Left cardiac atrium (tissue), 4 donors: ENCODE measurements at regions of chr10 and their contacts with region 1.

Region 1: GRCh38 chr10:58952747-58953466 is 223.5 kb upstream of the PHYHIPL start:
- DNase-seq: peak; percentile 38
- ATAC-seq: peak; percentile 66 to 82

Region 2: GRCh38 chr10:58531084-58531695 is 421.7 kb before region 1 on chr10:
- intact Hi-C with region 1: loop called in 1 of 2 experiments (anchors 10 kb)
- DNase-seq: peak; percentile 24
- ATAC-seq: peak in 1 of 2 donors; percentile 55

Region 3: GRCh38 chr10:58625070-58625469 is 327.8 kb before region 1 on chr10:
- intact Hi-C with region 1: no loop called
- DNase-seq: no peak
- ATAC-seq: peak in 1 of 2 donors; percentile 93

Region 4: DNA sequence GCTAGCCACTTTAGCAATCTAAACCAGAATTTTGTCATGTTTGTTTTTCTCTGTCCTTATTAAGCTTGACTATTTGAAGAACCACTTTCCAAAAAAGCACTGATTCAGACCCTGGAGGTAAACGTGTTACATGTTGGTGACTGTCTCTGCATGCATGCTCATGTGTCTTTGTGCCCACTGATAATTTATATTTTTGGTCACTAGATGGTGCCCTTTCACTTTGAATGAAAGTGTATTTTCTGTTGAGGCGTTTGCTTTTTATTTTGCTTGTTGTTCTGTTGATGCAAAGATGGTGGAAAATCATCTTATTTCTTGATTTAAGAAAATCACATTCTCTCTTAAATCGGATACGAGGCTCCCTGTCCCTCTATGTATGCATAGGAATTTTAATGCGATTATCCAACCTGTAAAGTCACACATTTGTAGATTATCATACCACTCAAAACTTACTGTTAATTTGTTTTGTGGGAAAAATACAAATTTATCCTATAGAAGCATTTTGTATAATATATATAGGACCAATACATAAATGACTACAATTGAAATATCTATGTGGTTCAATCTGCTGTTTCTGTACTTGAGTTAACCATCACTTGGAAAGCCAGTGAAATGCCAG is 170.9 kb before region 1 on chr10:
- intact Hi-C with region 1: loop called in 1 of 2 experiments (anchors 5 kb)
- DNase-seq: no peak
- ATAC-seq: peak; percentile 14 to 51

Region 5: DNA sequence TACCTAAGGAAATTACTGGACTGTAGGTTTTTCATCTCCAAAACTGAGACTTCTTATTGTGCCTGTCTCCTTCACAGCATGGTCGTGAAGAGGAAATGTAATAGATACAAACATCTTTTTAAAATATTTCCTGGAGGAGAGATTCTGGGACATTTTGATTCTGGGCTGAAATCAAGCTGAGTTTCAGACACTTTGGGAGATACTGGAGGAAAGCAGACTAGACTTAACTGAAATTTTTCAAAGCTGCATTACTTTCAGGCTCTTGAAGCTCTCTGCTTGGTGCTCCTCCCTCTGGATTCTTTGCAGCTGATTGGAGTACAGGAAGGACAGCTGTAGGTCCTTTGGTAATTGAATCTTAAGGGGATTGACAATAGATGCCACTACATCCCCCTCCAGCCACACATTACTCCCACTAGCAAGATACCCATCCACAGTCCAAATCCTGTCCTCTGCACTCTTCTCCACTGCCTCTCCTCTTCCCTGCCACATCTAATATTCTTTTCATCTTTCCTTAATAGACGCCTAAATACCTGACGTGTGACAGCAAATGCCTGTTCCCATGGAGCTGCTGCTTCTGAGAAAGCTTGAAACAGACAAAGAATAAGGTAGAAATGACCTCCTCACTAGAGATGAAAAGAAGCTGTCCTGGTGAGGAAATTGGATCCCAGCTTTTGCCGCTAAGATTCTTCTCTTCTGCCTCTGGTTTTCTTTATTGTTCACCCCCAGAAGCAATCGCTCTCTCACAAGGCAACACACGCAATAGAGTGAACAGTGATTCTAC is 112.0 kb after region 1 on chr10:
- intact Hi-C with region 1: no loop called
- DNase-seq: no peak
- ATAC-seq: no peak

Region 6: DNA sequence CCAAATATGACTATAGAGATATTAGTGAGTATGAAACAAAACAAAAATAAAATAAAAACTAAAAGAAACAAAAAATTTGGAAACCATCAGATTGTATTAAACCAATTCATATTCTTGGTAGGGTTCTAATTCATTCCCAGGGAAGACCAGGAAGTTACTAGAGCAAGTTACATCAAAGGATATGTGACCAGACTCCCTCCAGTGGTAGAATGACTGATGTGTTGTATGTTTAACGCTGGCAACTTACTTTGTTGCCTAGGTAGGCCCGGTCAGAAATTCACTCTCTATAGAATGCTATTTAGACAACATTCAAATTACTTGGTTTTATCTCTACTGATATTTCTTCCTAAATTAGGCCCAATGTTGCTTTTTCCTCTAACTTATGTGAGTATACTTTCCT is 228.8 kb after region 1 on chr10:
- intact Hi-C with region 1: loop called (anchors 2 to 5 kb)
- DNase-seq: no peak
- ATAC-seq: peak; percentile 59 to 74

Region 7: GRCh38 chr10:59240582-59241183 is 287.8 kb after region 1 on chr10:
- intact Hi-C with region 1: loop called in 1 of 2 experiments (anchors 10 kb)
- DNase-seq: no peak
- ATAC-seq: no peak

Region 8: DNA sequence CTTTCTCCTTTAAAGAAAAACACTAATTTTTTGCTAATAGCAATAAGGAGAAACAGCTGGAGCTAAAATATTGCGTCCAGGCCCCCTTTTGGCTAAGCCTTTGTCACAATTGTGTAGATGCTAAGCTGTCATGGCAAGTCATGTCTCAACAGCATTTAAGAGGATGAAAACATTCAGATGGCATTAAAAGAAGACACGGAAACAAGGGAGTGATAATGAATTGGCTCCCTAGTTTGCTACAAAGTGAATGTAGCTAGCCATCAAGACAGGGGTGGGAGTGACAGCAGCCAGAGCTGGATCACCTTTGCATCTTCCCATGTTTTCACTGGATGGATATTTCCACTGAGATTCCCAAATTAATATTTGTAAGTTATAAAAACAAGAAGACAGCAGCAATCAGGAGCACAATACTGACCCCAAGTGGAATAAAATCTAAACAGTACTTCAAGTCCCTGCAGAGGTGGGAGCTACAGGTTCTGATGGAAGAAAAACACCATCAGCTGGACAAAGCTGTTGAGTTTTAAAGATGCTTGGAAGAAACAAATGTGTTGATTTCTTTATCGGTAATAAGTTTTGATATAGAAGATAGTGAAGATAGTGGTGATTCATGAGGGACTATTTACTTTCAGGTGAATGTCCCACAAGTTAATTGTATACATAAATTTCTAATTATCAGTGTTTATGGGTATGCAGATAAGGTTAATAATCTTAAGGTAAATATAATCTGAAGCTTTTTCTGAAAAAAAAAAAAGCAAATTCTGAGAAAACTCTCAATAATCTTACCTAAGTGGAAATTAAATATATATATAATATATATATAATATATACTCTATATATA is 627.3 kb after region 1 on chr10:
- intact Hi-C with region 1: loop called in 1 of 2 experiments (anchors 5 kb)
- DNase-seq: no peak
- ATAC-seq: no peak

Region 9: GRCh38 chr10:60032723-60033122 is 1079.8 kb after region 1 on chr10:
- intact Hi-C with region 1: loop called in 1 of 2 experiments (anchors 10 kb)
- DNase-seq: peak; percentile 28
- ATAC-seq: peak; percentile 91 to 92

Region 10: DNA sequence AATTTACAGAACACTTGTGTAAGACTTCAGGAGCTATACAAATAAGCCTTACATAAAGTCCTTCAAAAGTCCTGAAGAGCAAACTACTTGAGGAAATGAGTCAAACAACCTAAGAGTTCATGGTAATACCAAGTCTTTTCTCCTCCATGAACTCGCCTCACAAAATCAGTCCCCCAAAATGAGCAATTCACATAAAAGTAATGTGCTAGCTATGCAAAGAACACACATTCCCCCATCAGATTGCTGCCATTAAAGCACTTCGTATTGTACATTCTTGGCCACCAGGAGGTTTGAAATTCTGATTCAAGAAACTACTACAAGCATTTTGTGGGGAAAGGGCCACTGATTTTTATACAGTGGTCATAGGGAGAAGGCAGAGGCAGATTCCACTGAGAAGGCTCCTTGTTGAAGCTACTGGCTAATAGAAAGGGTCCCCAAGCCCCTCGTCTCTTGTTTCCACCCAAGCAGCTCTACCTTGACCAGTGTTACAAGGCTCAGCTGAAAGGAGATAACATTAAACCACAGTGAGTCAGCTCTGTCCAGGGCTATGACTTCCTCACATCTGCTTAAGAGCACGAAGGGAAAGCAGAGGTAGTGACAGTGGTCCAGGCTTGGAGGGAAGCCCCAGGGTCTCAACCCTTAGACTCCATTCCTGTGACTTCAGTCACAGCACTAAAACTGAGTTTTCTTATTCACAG is 1710.2 kb after region 1 on chr10:
- intact Hi-C with region 1: no loop called
- DNase-seq: no peak
- ATAC-seq: no peak